ENCODE measurements at regions of chr2 and their contacts with region 1.

Region 1: DNA sequence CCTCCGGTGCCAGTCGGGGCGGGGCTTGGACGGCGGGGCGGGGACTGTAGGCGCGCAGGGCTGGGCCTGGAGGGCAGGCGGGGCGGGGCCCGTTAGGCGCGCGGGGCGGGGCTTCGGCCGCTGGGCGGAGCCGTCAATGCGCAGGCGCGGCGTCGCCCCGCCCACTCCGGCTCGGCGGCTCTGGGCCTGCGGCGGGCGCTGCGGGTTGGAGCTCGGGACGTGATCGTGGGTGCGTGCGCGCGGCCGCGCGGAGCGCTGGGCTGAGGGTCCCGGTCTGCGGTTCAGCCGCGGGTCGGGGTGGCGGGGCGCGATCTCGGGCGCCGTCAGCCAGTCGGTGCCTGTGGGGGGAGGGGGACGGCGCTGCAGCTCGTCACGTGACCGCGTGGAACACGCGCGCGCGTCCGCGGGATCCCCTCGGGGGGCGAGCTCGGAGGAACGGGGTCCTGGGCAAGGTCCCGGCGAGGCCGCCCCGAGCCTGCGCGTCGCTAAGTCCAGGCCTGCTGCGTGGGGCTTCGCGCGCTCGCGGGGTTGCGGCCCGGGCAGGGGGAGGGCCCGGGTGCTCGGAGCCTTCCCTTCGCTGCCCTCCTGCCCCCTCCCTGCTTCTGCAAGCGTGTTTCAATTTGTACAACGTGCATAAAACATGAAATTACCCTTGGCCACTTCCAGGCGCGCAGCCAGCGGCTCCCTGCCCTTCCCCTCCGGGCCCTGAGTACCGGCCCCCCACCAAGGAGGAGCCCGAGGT is at the start of gene D2HGDH:
- DNase-seq: no peak
- H3K4me3 ChIP-seq: peak within 1 kb of the TSS; percentile 77
- CTCF ChIP-seq: no peak

Region 2: GRCh38 chr2:241665727-241666440 is 68.8 kb before region 1 on chr2:
- CTCF ChIA-PET with region 1: interaction called, 17 read pairs
- POLR2A ChIA-PET with region 1: no interaction called
- DNase-seq: no peak
- H3K4me3 ChIP-seq: no peak overlapping the region
- CTCF ChIP-seq: no peak

Region 3: GRCh38 chr2:241702132-241703031 is 32.3 kb before region 1 on chr2:
- CTCF ChIA-PET with region 1: interaction called, 10 read pairs
- POLR2A ChIA-PET with region 1: interaction called, 6 read pairs
- DNase-seq: no peak
- H3K4me3 ChIP-seq: peak overlapping the region; percentile 83
- CTCF ChIP-seq: peak; percentile 53

Region 4: GRCh38 chr2:241724259-241724974 is 10.2 kb before region 1 on chr2:
- CTCF ChIA-PET with region 1: interaction called, 22 read pairs
- POLR2A ChIA-PET with region 1: no interaction called
- DNase-seq: no peak
- H3K4me3 ChIP-seq: no peak overlapping the region
- CTCF ChIP-seq: peak; percentile 7